ENCODE measurements at regions of chr15 and their contacts with region 1.

Region 1: DNA sequence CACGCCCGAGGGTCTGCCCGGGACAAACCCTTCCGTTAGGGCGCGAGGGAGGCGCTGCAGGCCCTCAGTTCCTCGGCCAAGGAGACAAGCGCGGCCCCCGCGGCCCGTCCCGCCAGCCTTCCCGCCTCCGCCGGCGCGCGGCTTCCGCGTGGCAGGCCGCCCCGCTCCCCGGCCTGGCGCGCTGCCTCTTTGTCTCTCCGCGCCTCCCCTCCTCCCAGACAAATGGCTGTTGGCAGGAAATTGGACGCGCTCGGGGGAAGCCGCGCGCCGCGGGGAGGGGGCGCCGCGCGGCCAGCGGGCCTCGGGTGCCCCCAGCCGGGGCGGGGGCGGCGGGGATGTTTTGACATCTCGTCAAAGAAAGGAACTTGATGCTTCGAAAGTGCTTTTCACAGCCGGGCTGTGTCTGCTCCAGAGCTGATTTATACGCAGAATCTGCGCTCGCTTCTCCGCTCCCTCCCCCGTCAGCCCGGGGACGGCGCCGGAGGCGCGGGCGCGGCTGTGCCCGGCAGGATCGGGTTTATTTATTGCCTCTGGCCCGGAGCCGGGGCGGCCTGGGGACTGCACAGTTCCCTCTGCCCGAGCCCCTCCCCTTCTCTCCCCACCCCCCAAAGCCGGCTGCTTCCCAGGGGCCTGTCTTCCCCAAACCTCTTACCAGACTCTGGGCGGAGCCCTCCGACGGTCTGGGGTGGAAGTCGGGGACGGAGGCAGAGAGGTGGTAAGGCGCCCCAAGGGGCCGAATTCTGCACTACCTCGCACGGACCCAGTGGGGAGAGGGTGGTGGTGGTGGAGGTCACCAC is 20.7 kb downstream of the SHF start:
- DNase-seq: peak; percentile 70 to 97 (median 80)

Region 2: GRCh38 chr15:44788748-44789147 is 378.3 kb before region 1 on chr15:
- intact Hi-C with region 1: no loop called
- DNase-seq: no peak

Region 3: GRCh38 chr15:45200001-45200798 is 33.2 kb after region 1 on chr15:
- intact Hi-C with region 1: loop called (anchors 1 kb)
- DNase-seq: peak; percentile 92 to 99 (median 96)

Region 4: DNA sequence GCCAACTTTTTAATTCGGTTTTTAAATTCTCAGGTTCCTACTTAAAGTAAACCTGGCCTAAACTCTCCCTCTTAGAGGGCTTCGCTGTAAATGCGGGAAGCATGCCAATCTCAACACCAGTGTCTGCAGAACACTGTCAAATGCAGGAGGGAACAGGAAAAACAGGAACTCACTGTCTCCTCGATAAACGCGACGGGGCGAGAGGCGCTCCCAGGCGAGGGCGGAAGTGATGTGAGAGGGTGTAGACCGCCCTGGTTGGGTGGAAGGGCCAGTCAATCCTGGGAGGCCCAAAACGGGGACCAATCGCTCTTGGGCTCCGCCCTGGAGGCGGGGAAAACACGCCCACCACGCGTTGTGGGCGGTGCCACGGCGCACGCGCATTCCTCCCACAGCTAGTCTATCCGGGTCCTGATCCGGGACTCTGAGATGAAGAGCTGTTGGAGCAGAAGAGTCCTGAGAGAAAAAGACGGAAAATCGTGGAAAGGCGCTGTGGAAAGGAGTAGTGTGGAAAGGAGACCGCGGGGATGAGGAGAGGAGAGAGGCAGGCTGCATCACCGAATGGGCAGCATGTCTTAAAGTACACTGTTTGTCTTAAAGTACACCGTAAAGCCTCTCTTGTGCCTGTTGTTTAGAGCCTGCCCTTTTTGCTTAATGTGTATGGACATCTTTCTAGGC is 112.1 kb after region 1 on chr15:
- intact Hi-C with region 1: no loop called
- DNase-seq: peak; percentile 97 to 100 (median 99)

Measured in posterior cingulate gyrus (tissue), 11 donors.